SK-N-SH (cell line): ENCODE measurements at regions of chr19 and their contacts with region 1.

Region 1: GRCh38 chr19:55599468-55600279 is at the start of gene FIZ1:
- DNase-seq: peak; percentile 89
- H3K4me3 ChIP-seq: peak within 1 kb of the TSS; percentile 67 to 91
- H3K27ac ChIP-seq: peak within 1 kb of the TSS; percentile 98 to 99
- H3K4me1 ChIP-seq: peaks cover 9 to 15% of the 10 kb centered on the region in 2 experiments; a peak in 3 of 4 replicates
- H3K27me3 ChIP-seq: no peaks in the 10 kb centered on the region
- CTCF ChIP-seq: no peak
- EP300 ChIP-seq: peak; percentile 21 to 36; a peak in 2 of 4 replicates
- RAD21 ChIP-seq: no peak
- polyA plus RNA-seq, gene FIZ1: 5.2 and 5.7 TPM in 2 replicates

Region 2: DNA sequence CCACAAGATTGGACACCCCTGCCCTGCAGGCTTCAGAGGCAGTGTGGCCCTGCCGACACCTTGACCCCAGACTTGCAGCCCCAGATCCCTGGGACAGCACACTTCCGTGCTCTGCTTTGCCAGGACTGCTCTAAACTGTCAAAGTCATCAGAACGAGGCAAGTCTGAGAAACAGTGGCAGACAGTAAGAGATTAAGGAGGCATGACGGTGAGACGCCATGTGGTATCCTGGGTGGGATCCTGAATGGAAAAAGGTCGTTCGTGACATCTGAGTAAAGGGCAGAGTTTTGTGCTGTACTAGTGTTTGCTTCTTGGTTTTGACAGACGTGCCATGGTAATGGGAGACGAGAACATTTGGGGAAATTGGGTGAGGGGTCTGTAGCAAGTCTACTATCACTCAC is 32.9 kb before region 1 on chr19:
- CTCF ChIA-PET with region 1: no interaction called
- POLR2A ChIA-PET with region 1: no interaction called
- DNase-seq: no peak
- H3K4me3 ChIP-seq: no peak overlapping the region
- H3K27ac ChIP-seq: no peak overlapping the region
- H3K4me1 ChIP-seq: no peaks in the 10 kb centered on the region
- H3K27me3 ChIP-seq: no peaks in the 10 kb centered on the region
- CTCF ChIP-seq: no peak
- EP300 ChIP-seq: no peak
- RAD21 ChIP-seq: no peak

Region 3: GRCh38 chr19:55586976-55587668 is 12.6 kb before region 1 on chr19:
- CTCF ChIA-PET with region 1: interaction called, 7 read pairs
- POLR2A ChIA-PET with region 1: interaction called, 32 read pairs
- DNase-seq: peak; percentile 97
- H3K4me3 ChIP-seq: peak overlapping the region; percentile 44 to 60
- H3K27ac ChIP-seq: peak overlapping the region; percentile 24 to 85; a peak in 3 of 4 replicates
- H3K4me1 ChIP-seq: peaks cover 13 to 15% of the 10 kb centered on the region in 2 experiments; a peak in 2 of 4 replicates
- H3K27me3 ChIP-seq: no peaks in the 10 kb centered on the region
- CTCF ChIP-seq: no peak
- EP300 ChIP-seq: no peak
- RAD21 ChIP-seq: peak; percentile 1; the same call in 1 of the 2 replicates

Region 4: DNA sequence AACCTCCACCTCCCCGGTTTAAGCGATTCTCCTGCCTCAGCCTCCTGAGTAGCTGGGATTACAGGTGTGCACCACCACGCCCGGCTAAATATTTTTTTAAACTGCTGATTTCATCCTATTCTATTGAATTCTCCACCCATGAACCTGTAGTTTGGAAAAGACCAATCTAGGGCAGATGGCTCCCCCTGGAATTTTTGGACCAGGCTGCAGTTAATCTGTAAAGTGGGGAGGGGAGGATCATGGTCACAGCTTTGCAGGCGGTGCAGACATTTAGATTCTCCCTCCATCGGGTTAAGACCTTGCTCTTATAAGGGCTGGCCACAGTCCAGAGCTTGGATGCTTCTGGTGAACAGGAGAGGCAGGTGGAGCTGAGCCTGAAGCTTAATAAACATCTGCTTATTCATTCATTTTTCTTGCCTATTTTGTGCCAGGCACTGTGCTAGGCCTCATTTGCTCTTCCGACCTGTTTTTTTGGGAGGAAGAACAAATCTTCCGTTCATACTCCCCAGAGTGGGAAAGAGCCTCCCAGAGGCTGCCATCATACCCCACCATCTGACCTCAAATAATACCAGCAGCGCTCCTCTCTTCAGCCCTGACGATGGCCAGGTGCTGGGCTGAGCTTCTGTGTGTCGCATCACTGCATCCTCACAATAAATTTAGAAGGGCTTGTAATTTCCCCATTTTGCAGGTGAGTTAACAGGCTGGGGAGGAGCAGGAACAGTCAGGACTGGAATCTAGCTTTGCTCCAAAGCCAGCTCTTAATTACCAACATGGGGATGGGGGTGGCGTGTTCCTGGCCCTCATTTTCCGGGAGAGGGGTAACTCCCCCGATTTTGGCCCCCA is 47.4 kb after region 1 on chr19:
- CTCF ChIA-PET with region 1: no interaction called
- POLR2A ChIA-PET with region 1: no interaction called
- DNase-seq: peak; percentile 23
- H3K4me3 ChIP-seq: peak overlapping the region; percentile 77 to 82
- H3K27ac ChIP-seq: peak overlapping the region; percentile 27 to 94; a peak in 3 of 4 replicates
- H3K4me1 ChIP-seq: peaks cover 13 to 42% of the 10 kb centered on the region in 2 experiments; a peak in 2 of 4 replicates
- H3K27me3 ChIP-seq: no peaks in the 10 kb centered on the region
- CTCF ChIP-seq: no peak
- EP300 ChIP-seq: no peak
- RAD21 ChIP-seq: no peak